Activated CD8-positive, alpha-beta T cell treated with anti-CD3 and anti-CD28 coated beads, Interleukin-2, amount 10 ng/mL, durations not matched to agents 7 days and 5 days (primary cell): ENCODE measurements at regions of chr12 and their contacts with region 1.

Region 1: DNA sequence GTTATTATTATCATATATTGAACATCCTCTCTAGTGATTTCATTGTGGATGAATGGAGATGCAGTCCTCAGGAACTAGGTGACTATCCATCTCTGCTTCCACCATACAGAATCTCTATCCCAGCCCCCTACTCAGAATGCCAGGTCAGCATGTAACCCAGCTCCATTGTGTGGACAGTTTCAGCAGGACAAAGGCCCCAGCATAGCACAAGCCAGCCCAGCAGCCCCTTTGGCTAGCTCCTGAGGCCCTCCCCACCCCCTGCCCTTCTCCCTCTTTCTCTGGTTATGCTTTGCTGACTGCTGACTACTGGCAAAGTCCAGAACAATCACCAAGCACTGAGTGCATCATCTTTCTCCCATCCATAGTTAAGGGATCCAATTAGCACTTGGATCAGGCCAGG is 5.8 kb upstream of the SPRYD4 start:
- DNase-seq: no peak
- ATAC-seq: no peak
- H3K4me3 Mint-ChIP-seq: no peak overlapping the region
- H3K27ac Mint-ChIP-seq: no peak overlapping the region
- H3K4me1 Mint-ChIP-seq: peaks cover 10% of the 10 kb centered on the region
- H3K27me3 Mint-ChIP-seq: no peaks in the 10 kb centered on the region

Region 2: DNA sequence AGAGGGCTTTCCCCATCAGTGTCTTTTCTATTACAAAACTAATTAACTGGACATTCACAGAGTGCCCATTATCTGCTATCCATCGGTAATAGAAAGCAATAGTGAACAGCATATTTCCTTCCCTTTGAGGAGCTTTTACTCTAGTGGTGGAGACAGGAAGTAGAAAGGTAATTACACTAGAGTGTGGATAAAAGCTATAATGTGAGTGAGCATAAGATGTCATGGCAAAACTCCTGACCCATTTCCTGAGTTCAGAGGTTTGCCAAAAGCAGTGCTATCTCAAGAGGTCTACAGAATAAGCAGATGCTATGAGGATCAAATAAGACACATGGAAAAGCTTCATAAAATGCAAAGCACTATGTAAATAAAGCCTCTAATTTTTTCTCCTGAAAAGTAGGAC is 37.4 kb before region 1 on chr12:
- CTCF ChIA-PET with region 1: interaction called, 13 read pairs
- POLR2A ChIA-PET with region 1: no interaction called
- DNase-seq: no peak
- ATAC-seq: no peak
- H3K4me3 Mint-ChIP-seq: no peak overlapping the region
- H3K27ac Mint-ChIP-seq: peak overlapping the region; percentile 62
- H3K4me1 Mint-ChIP-seq: peaks cover 8% of the 10 kb centered on the region
- H3K27me3 Mint-ChIP-seq: no peaks in the 10 kb centered on the region

Region 3: DNA sequence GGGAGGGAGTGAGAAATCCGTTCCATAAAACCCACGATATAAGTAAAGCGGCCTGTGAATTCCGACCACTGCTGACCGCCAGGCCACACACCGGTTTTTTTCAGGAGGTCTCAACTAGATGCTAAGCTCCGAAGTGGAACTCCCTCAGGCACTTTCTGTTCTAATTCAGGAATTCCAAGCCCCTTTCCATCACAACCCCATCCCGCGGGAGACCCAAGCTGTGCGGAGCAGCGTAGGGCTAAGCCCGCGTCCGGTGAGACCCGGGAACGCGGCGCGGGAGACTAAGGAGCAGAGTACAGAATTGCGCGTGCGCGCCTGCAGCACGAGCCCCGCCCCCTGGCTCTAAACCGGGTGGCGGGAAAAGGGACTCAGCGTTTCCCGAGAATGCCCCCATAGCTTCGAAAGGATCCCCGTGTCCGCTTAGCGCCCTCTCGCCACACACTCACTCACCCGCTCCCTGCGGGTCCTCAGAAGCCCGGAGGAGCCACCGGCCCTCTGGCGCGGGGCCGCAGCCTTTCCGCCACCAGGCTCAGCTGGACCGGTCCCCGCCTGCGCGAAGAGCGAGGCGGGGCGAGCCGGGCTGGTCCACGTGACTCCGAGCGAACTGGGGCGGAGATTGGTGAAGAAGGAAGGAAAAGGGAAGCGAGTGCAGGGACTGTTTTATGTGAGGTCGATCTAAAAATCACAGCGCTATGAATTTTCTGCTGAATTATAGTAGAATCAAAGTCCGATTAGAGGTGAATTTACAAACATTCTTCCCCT is 13.5 kb before region 1 on chr12 and contains the start of gene TIMELESS:
- CTCF ChIA-PET with region 1: interaction called, 59 read pairs
- POLR2A ChIA-PET with region 1: interaction called, 9 read pairs
- DNase-seq: peak; percentile 89
- ATAC-seq: peak; percentile 99
- H3K4me3 Mint-ChIP-seq: peak within 1 kb of the TSS; percentile 91
- H3K27ac Mint-ChIP-seq: peak within 1 kb of the TSS; percentile 87
- H3K4me1 Mint-ChIP-seq: peaks cover 39% of the 10 kb centered on the region
- H3K27me3 Mint-ChIP-seq: peaks cover 2% of the 10 kb centered on the region
- total RNA-seq, gene TIMELESS: 62.7 to 65.7 TPM